ENCODE measurements at regions of chr15 and their contacts with region 1.

Region 1: DNA sequence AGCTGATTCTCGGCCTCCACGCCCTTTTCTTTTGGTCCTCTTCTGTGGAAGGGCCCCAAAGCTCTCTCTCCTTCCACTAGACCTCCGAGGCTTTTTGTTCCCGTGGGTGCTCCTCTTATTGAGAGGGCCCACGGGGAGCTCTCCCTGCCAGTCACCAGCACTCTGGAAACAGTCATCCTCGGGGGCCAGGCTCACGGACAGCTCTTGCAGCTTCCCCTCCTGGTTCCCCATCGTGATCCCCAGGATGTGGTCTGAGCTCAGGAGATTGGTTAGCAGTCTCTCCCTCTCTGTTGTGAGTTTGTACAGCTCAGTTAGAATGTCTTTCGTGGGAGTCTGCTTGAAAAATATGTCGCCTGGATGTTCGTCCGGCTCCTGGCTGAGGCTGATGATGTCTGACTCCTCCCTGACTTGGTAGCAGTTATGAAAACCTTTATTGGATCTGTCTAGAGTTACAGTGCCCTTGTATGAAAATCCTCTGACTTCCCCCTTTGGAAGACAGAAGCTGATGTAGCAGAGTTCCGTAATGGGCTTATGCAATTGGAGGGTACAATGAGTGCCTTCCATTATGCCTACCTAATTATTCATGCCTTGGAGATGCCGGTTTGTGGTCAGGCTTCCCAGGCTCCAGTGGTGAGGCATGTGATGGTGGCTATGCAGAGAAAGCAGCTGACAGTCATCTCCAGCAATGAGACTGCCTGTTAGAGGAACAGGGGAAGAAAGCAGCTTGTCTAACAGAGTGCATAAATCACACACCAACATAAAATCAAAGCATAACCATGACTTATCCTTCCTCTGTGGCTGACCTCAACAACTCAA is 40.0 kb downstream of the FMN1 start:
- H3K4me3 Mint-ChIP-seq: peak overlapping the region; percentile 54
- H3K27ac Mint-ChIP-seq: peak overlapping the region; percentile 83
- H3K4me1 Mint-ChIP-seq: peaks cover 68% of the 10 kb centered on the region
- H3K27me3 Mint-ChIP-seq: no peaks in the 10 kb centered on the region

Region 2: GRCh38 chr15:32790352-32790999 is 364.1 kb before region 1 on chr15:
- intact Hi-C with region 1: no loop called
- H3K4me3 Mint-ChIP-seq: no peak overlapping the region
- H3K27ac Mint-ChIP-seq: no peak overlapping the region
- H3K4me1 Mint-ChIP-seq: no peaks in the 10 kb centered on the region
- H3K27me3 Mint-ChIP-seq: no peaks in the 10 kb centered on the region

Region 3: GRCh38 chr15:32965897-32966296 is 188.7 kb before region 1 on chr15:
- intact Hi-C with region 1: no loop called
- H3K4me3 Mint-ChIP-seq: no peak overlapping the region
- H3K27ac Mint-ChIP-seq: no peak overlapping the region
- H3K4me1 Mint-ChIP-seq: no peaks in the 10 kb centered on the region
- H3K27me3 Mint-ChIP-seq: no peaks in the 10 kb centered on the region

Region 4: GRCh38 chr15:33138000-33138399 is 16.6 kb before region 1 on chr15:
- intact Hi-C with region 1: loop called (anchors 2 kb)
- H3K4me3 Mint-ChIP-seq: no peak overlapping the region
- H3K27ac Mint-ChIP-seq: peak overlapping the region; percentile 40
- H3K4me1 Mint-ChIP-seq: peaks cover 24% of the 10 kb centered on the region
- H3K27me3 Mint-ChIP-seq: peaks cover 3% of the 10 kb centered on the region

Region 5: DNA sequence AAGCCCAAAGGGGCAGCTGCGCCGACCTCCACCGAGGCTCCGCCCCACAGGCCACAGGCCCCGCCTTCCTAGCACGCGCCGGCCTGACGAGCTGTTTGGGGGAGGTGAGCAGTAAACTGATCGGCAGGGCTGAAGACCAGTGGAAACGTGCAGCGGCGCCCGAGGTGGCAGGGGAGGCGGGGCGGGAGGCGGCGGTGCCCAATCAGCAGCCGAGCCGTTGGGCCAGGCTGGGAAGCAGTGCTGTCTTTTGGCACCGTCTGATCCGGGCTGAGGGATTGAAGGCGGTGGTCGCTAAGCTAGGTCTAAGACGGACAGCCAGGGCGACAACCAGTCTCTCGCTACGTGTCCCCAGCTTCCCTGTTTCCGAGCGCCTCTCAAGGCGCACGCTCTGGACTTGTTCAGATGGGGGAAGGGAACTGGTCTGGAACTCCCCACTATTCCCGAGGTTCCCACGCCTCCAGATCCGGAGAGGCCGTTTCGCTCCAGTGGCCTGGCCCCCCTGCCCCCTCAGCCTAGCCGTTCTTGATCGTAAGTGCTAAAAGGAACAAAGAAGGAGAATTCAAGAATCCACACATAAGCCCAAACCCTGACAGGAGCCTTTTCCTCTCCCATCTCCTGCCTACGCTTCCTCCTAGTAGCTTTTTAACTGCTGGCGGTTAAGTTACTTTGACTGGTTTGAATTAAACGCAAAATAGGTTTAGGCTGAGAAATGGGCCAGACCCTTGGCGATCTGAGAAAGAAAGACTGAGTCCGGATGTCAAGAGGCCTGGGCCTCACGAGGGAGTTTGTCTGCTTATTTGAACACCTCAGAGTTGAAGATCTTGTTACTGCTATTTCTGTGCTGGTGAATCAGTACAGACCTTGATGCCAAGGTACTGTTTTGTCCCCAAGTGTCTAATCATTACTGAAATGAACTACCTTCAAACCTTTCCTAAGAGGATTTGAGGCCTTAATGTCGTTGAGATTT is 40.4 kb after region 1 on chr15 and contains the start of gene FMN1:
- intact Hi-C with region 1: loop called (anchors 5 kb)
- H3K4me3 Mint-ChIP-seq: peak within 1 kb of the TSS; percentile 78
- H3K27ac Mint-ChIP-seq: peak within 1 kb of the TSS; percentile 89
- H3K4me1 Mint-ChIP-seq: peaks cover 17% of the 10 kb centered on the region
- H3K27me3 Mint-ChIP-seq: peaks cover 32% of the 10 kb centered on the region

Region 6: DNA sequence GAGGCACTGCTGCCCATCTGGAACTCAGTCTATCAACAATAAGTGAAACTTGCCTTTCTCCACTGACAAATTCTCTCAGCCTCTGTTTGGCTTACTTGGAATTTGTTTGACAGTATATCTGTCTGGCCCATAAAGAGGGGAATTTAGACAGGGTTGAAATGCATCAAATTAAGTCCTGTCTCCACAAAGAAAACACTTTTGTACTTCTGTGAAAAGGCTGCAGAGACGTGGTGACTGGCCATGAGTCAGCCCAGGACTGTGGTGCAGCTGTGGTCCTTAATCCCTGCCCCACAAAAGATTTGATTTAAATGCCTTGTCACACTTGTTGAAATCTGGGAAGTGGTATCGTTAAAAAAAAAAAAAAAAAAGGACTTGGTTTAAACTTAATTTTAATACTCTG is 203.7 kb after region 1 on chr15:
- intact Hi-C with region 1: no loop called
- H3K4me3 Mint-ChIP-seq: no peak overlapping the region
- H3K27ac Mint-ChIP-seq: no peak overlapping the region
- H3K4me1 Mint-ChIP-seq: no peaks in the 10 kb centered on the region
- H3K27me3 Mint-ChIP-seq: peaks cover 8% of the 10 kb centered on the region